ENCODE measurements at regions of chr5 and their contacts with region 1.

Region 1: GRCh38 chr5:16666883-16667398 is 50.1 kb upstream of the RETREG1 start:
- DNase-seq: peak; percentile 64
- H3K4me3 ChIP-seq: no peak overlapping the region
- H3K27ac ChIP-seq: peak overlapping the region in 1 of 2 experiments; percentile 18; a peak in 1 of 4 replicates
- H3K4me1 ChIP-seq: peaks cover 0 to 21% of the 10 kb centered on the region in 2 experiments; a peak in 2 of 4 replicates
- H3K27me3 ChIP-seq: no peaks in the 10 kb centered on the region
- CTCF ChIP-seq: peak; percentile 42
- EP300 ChIP-seq: peak in 1 of 2 experiments; percentile 38; a peak in 1 of 4 replicates
- RAD21 ChIP-seq: peak; percentile 80

Region 2: GRCh38 chr5:16391858-16392649 is 274.9 kb before region 1 on chr5:
- CTCF ChIA-PET with region 1: no interaction called
- POLR2A ChIA-PET with region 1: no interaction called
- DNase-seq: no peak
- H3K4me3 ChIP-seq: no peak overlapping the region
- H3K27ac ChIP-seq: peak overlapping the region; percentile 40 to 99; a peak in 3 of 4 replicates
- H3K4me1 ChIP-seq: peaks cover 8 to 12% of the 10 kb centered on the region in 2 experiments; a peak in 3 of 4 replicates
- H3K27me3 ChIP-seq: no peaks in the 10 kb centered on the region
- CTCF ChIP-seq: no peak
- EP300 ChIP-seq: peak in 1 of 2 experiments; percentile 43; a peak in 1 of 4 replicates
- RAD21 ChIP-seq: no peak

Region 3: DNA sequence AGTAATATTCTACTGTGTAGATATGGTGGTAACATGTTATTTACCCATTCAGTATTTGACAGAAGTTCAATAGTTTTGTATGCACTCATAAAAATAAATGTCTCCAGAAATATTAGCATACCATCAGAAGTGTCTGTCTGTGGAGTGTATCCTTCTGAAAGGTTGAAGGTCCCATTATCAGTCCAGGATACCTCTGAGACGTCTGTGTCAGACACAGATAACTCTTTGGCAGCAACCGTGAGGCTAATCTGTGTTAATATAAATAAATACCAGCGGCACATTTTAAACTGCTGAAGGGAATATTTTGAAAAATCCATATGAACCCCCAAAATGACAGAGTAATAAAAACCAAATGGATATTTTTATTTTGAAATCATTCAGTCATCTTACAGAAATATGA is 189.4 kb before region 1 on chr5:
- CTCF ChIA-PET with region 1: interaction called, 24 read pairs
- POLR2A ChIA-PET with region 1: no interaction called
- DNase-seq: no peak
- H3K4me3 ChIP-seq: no peak overlapping the region
- H3K27ac ChIP-seq: no peak overlapping the region
- H3K4me1 ChIP-seq: no peaks in the 10 kb centered on the region; a peak in 1 of 4 replicates
- H3K27me3 ChIP-seq: no peaks in the 10 kb centered on the region
- CTCF ChIP-seq: no peak
- EP300 ChIP-seq: no peak
- RAD21 ChIP-seq: no peak

Region 4: GRCh38 chr5:16489322-16489791 is 177.6 kb before region 1 on chr5:
- CTCF ChIA-PET with region 1: interaction called, 74 read pairs
- POLR2A ChIA-PET with region 1: interaction called, 3 read pairs
- DNase-seq: peak; percentile 54
- H3K4me3 ChIP-seq: no peak overlapping the region
- H3K27ac ChIP-seq: no peak overlapping the region
- H3K4me1 ChIP-seq: no peaks in the 10 kb centered on the region
- H3K27me3 ChIP-seq: no peaks in the 10 kb centered on the region
- CTCF ChIP-seq: peak; percentile 87
- EP300 ChIP-seq: no peak
- RAD21 ChIP-seq: peak; percentile 93

Region 5: GRCh38 chr5:16505140-16505891 is 161.6 kb before region 1 on chr5:
- CTCF ChIA-PET with region 1: interaction called, 10 read pairs
- POLR2A ChIA-PET with region 1: no interaction called
- DNase-seq: no peak
- H3K4me3 ChIP-seq: no peak overlapping the region
- H3K27ac ChIP-seq: no peak overlapping the region
- H3K4me1 ChIP-seq: peaks cover 0 to 2% of the 10 kb centered on the region in 2 experiments; a peak in 1 of 4 replicates
- H3K27me3 ChIP-seq: no peaks in the 10 kb centered on the region
- CTCF ChIP-seq: no peak
- EP300 ChIP-seq: no peak
- RAD21 ChIP-seq: no peak

Region 6: DNA sequence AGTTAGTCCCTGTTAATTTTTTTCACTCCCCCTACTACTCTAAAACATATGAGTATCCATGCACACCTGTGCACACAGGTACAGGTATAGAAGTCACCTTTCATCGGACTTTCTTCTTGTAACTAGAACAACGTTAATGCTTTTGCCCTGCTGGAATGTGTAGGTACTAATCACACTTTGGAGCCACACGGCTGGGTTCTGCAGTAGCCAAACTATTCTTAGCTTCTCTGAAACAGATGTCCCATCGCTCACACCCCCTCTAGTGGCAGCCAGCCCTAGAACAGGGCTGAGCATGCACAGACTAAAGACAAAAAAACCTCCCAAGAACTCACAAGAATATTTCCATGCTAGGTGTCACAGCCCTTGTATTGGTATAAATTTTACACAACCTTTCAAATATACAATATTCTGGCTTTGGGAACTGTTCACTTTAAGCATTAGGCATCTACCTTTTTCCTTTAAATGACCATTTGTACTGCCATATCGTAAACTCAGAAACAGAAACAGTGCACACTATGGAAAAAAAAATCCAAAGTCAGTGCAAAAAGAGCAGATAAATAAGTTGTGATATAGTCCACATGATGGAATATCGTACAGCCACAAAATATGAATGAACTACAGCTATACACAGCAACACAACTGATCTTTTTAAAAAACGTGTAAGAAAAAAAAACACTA is 114.1 kb before region 1 on chr5:
- CTCF ChIA-PET with region 1: interaction called, 18 read pairs
- POLR2A ChIA-PET with region 1: no interaction called
- DNase-seq: peak; percentile 65
- H3K4me3 ChIP-seq: no peak overlapping the region; a peak in 1 of 4 replicates
- H3K27ac ChIP-seq: no peak overlapping the region
- H3K4me1 ChIP-seq: no peaks in the 10 kb centered on the region
- H3K27me3 ChIP-seq: no peaks in the 10 kb centered on the region
- CTCF ChIP-seq: peak; percentile 90
- EP300 ChIP-seq: no peak
- RAD21 ChIP-seq: peak; percentile 65

Region 7: GRCh38 chr5:16656561-16657191 is 10.3 kb before region 1 on chr5:
- CTCF ChIA-PET with region 1: interaction called, 20 read pairs
- POLR2A ChIA-PET with region 1: no interaction called
- DNase-seq: no peak
- H3K4me3 ChIP-seq: no peak overlapping the region
- H3K27ac ChIP-seq: no peak overlapping the region
- H3K4me1 ChIP-seq: no peaks in the 10 kb centered on the region
- H3K27me3 ChIP-seq: no peaks in the 10 kb centered on the region
- CTCF ChIP-seq: no peak
- EP300 ChIP-seq: no peak
- RAD21 ChIP-seq: no peak